ENCODE measurements at regions of chr19 and their contacts with region 1.

Region 1: GRCh38 chr19:2475702-2476450 is at the start of gene GADD45B:
- DNase-seq: peak; percentile 99
- H3K4me3 ChIP-seq: peak within 1 kb of the TSS; percentile 67 to 100
- H3K27ac ChIP-seq: peak within 1 kb of the TSS; percentile 44 to 88; a peak in 3 of 4 replicates
- H3K4me1 ChIP-seq: peaks cover 6 to 27% of the 10 kb centered on the region in 2 experiments; a peak in 1 of 4 replicates
- H3K27me3 ChIP-seq: no peaks in the 10 kb centered on the region
- CTCF ChIP-seq: no peak
- EP300 ChIP-seq: peak in 1 of 2 experiments; percentile 59; a peak in 2 of 4 replicates
- RAD21 ChIP-seq: no peak
- polyA plus RNA-seq, gene GADD45B: 54.0 and 67.6 TPM in 2 replicates

Region 2: DNA sequence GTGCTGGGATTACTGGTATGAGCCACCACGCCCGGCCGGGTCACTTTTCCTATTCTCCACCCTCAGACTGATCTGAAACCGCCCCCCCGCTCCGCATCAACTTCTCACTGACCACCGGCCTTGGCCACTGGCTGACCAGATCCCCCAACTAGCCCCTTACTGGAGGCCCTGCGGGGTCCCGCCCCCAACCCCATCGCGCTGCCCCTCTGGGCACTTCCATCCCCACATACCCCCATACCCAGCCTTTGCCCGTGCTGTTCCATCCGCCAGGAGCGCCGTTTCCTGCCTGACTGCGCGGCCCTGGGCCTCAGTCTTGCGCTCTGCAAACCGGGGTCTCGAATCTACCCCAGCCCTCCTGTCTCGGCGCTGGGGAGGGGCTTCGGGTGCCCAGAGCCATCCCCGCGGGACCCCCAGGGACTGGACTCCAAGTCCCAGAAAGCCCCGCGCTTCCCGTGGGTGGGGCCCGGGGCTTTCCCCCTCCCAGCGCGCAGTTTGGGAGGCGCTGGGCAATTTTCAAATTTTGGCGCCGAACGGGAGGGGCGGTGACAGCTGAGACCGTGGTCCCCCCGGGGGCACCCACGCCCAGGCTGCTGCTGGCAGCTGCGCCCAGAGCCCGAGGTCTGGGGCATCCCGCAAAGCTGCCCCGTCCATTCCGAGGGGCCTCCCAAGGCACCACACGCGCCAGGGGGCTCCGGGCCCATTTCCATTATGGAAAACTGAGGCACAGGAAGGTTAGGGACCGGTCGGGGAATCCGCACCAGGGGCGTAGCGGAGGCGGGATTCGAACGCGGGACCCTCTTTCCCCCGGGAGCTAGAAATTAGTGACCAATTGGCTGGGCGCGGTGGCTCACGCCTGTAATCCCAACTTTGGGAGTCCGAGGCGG is 13.9 kb before region 1 on chr19:
- CTCF ChIA-PET with region 1: interaction called, 16 read pairs
- POLR2A ChIA-PET with region 1: interaction called, 3 read pairs
- DNase-seq: peak; percentile 92
- H3K4me3 ChIP-seq: peak overlapping the region; percentile 54 to 75
- H3K27ac ChIP-seq: peak overlapping the region in 1 of 2 experiments; percentile 60; a peak in 3 of 4 replicates
- H3K4me1 ChIP-seq: no peaks in the 10 kb centered on the region; a peak in 2 of 4 replicates
- H3K27me3 ChIP-seq: no peaks in the 10 kb centered on the region
- CTCF ChIP-seq: peak; percentile 35
- EP300 ChIP-seq: no peak
- RAD21 ChIP-seq: no peak

Region 3: DNA sequence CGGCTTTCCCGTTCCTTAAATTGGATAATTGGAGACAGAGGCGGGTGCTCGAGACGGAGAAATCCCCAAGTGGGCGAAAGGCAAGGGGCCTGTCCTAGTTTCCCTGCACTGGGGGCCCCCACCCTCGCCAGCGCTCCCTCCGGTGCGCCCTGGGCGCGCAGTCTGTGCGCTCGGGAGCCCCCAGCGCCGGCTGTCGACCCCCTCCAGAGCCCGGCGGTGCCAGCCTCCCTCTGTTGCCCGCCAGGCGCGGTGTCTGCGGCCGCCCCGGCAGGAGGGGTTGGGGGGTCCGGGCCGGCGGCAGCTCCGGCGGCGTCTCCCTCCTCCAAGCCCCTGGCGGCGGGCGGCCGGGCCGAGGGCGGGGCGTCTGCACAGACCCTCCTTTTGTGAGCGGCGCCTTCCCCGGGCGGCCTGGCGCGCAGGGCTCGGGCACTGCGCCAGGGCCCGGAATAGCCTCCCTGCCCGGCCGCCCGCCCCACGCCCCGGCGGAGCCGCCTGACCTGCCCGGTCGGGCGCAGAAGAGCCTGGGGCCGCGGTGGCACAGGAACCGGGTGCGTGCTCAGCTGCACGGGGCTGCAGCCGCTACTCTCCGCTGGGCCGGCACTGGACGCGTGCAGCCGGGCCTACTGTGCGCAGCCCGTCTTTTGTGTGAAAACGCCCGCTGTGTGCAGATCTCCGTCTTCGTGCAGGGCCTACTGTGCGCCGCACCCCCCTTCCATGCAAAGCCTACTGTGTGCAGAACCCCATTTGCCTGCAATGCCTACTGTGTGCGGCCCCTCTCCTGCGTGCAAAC is 13.3 kb after region 1 on chr19:
- CTCF ChIA-PET with region 1: interaction called, 14 read pairs
- POLR2A ChIA-PET with region 1: interaction called, 5 read pairs
- DNase-seq: peak; percentile 92
- H3K4me3 ChIP-seq: peak overlapping the region; percentile 42 to 52
- H3K27ac ChIP-seq: no peak overlapping the region
- H3K4me1 ChIP-seq: peaks cover 9 to 16% of the 10 kb centered on the region in 2 experiments; a peak in 3 of 4 replicates
- H3K27me3 ChIP-seq: no peaks in the 10 kb centered on the region
- CTCF ChIP-seq: no peak
- EP300 ChIP-seq: no peak
- RAD21 ChIP-seq: no peak

Region 4: DNA sequence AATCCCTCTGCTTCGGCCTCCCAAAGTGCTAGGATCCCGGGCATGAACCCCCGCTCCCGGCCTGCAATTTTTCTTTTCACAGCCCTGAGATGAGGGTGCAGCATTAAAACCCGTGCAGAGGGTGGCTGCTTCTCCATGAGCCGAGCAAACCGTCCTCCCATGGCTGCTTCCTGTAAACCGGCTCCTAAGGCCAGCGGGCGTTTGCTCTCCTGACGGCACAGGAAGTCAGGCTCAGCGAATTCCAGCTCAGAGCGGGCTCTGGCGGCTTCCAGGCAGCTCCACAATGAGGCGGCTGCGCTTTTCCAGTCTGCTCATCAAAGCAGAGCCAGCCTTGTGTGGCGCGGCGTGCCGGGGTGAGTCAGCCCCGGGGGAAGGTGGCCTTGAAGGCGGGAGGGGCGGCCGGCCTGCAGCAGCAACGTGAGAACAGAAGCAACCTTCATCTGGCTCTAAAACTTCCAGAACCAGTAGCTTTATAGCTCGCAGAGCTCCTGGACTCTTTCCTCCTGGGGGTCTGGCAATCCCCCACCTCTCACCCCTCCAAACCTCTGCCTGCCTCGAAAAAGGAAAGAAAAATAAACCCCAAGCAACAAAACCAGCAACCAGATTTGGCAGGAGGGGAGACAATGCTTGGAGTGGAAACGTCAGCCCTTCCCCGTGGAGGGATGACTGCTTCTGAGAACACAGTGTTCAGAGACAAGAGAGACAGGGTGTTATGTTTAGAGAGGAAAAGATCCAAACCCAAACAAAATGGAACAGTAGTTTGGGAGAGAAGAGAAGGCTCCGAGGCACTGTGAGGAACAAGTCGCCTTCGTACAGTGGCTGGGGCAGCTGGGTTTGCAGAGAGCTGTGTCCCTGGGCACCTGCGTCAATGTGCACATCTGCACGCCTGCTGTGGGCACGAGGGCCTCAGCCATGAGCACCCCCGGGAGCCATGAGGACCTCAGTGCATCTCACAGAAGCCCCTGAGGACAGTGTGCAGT is 67.9 kb after region 1 on chr19:
- CTCF ChIA-PET with region 1: interaction called, 13 read pairs
- POLR2A ChIA-PET with region 1: interaction called, 11 read pairs
- DNase-seq: peak; percentile 91
- H3K4me3 ChIP-seq: peak overlapping the region; percentile 7 to 22; a peak in 2 of 4 replicates
- H3K27ac ChIP-seq: peak overlapping the region; percentile 86 to 90
- H3K4me1 ChIP-seq: peaks cover 13 to 43% of the 10 kb centered on the region in 2 experiments; a peak in 3 of 4 replicates
- H3K27me3 ChIP-seq: no peaks in the 10 kb centered on the region
- CTCF ChIP-seq: peak; percentile 41
- EP300 ChIP-seq: peak; percentile 21 to 83; a peak in 1 of 4 replicates
- RAD21 ChIP-seq: peak; percentile 55

Region 5: DNA sequence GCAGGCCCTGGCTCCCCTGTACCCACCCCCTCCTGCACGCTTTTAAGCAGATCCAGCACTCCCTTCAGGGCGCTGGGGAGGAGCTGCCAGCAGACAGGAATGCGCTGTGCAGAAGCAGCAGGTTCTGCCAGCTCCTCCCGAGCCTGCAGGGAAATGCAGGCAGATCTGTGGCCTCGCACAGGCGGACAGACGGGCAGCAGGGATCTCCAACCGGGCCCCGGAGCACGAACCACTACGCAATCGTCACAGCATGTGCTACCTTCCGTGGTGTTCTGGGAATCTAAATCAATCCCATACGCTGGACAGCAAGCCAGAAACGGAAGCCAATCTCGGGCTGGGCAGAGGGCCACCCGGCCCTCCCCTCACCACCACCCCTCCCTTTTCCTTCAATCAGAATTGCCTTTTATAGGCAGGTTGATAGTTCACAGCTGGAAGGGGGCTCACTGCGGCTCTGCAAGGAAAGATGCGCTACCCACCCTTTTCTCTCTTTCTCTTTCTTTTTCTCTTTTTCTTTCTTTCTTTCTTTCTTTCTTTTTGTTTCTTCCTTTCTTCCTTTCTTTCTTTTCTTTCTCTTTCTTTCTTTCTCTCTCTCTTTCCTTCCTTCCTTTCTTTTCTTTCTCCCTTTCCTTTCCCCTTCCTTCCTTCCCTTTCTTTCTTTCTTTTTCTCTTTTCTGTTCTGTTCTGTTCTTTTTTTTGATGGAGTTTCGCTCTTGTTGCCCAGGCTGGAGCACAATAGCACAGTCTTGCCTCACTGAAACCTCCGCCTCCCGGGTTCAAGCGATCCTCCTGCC is 126.7 kb after region 1 on chr19:
- CTCF ChIA-PET with region 1: interaction called, 309 read pairs
- POLR2A ChIA-PET with region 1: interaction called, 7 read pairs
- DNase-seq: peak; percentile 87
- H3K4me3 ChIP-seq: peak overlapping the region in 1 of 2 experiments; percentile 26; a peak in 2 of 4 replicates
- H3K27ac ChIP-seq: peak overlapping the region; percentile 47 to 55
- H3K4me1 ChIP-seq: peaks cover 6 to 7% of the 10 kb centered on the region in 2 experiments; a peak in 2 of 4 replicates
- H3K27me3 ChIP-seq: no peaks in the 10 kb centered on the region
- CTCF ChIP-seq: no peak
- EP300 ChIP-seq: peak; percentile 35 to 71; a peak in 1 of 4 replicates
- RAD21 ChIP-seq: no peak

Region 6: GRCh38 chr19:2610637-2611482 is 135.0 kb after region 1 on chr19:
- CTCF ChIA-PET with region 1: interaction called, 309 read pairs
- POLR2A ChIA-PET with region 1: interaction called, 15 read pairs
- DNase-seq: peak; percentile 92
- H3K4me3 ChIP-seq: peak overlapping the region; percentile 26 to 55; a peak in 2 of 4 replicates
- H3K27ac ChIP-seq: peak overlapping the region; percentile 40 to 63; a peak in 3 of 4 replicates
- H3K4me1 ChIP-seq: peaks cover 0 to 2% of the 10 kb centered on the region in 2 experiments; a peak in 1 of 4 replicates
- H3K27me3 ChIP-seq: no peaks in the 10 kb centered on the region
- CTCF ChIP-seq: peak; percentile 94
- EP300 ChIP-seq: no peak
- RAD21 ChIP-seq: peak; percentile 94

Region 7: DNA sequence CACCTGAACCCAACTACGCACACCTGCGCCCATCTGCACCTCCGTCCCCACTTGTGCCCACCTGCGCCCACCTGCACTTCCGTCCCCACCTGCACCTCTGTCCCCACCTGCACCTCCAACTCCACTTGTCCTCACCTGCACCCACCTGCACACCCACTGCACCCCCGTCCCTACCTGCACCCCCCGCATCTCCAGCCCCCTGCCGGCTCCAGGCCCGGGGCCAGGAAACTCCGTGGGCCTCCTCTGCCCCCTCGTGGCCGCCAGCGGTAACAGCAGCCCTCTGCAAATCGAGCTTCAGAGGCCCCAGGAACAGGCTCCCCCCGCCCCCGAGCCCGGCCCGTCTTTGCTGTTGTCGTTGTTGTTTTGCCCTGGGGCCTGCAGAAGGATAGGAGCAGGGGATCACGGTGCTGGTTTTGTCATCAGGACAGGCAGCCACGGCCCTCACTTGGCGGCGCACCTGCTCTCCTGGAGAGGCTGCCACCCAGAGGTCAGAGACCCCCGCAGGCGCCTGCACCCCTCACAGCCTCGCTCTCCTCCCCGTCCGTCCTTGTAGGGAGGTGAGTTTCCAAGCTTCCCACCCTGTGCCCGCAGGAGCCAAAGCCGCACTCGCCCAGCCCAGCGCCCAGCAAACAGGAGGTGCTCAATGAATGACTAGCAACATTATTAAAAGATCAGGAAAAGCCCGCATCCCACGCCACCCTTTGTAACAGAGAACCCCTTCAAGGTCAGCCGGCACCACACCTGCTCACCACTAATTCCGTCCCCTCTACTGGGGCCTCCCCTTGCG is 161.2 kb after region 1 on chr19:
- CTCF ChIA-PET with region 1: interaction called, 14 read pairs
- POLR2A ChIA-PET with region 1: no interaction called
- DNase-seq: peak; percentile 94
- H3K4me3 ChIP-seq: 0 out of 4 replicates have a peak overlapping the region, but pooled peaks of 1 of the 2 experiments have one; percentile 23
- H3K27ac ChIP-seq: no peak overlapping the region
- H3K4me1 ChIP-seq: peaks cover 0 to 3% of the 10 kb centered on the region in 2 experiments; a peak in 1 of 4 replicates
- H3K27me3 ChIP-seq: no peaks in the 10 kb centered on the region
- CTCF ChIP-seq: peak; percentile 79
- EP300 ChIP-seq: no peak
- RAD21 ChIP-seq: peak; percentile 66

Measured in SK-N-SH (cell line).